Activated T-helper 2 cell treated with anti-CD3 and anti-CD28 coated beads, Interferon-gamma antibody, Interleukin-2, Interleukin-4, amounts not matched to agents 10 μg/mL and 5 μg/mL and 100 μg/mL, durations not matched to agents 14 hours and 24 hours and 36 hours (primary cell): ENCODE measurements at regions of chr1 and their contacts with region 1.

Region 1: DNA sequence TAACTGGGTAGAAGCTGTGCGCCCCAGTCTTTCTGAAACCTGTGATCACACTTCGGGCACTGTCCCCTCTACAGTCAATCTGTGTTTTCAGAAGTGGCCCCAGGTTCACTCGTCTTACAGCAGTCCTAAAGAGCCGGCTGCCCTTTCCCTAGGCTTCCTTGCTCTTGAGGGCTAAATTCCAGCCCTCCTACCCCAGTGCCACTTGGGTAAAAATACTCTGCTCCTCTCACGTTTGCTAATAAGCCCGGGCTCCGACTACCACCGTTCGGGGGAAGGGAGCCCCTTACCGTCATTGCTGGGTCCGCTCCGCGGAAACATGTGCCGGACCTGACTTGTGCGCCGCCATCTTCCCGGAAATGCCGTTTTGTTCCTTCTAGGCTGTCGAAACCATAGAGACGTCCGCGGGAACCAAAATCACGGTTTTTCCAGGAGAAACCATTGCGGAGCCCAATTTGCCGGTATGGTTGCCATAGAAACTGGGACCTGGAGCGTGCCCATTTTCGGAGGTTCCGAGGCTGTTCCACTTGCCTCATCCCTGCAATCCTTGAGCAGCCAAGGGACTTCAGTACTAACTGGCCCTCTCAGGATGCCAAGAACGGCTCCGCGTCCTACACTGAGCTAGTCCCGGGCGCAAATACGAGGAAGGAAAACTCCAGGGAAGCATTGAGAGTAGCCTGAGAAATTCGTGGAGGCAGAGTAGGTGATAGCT is at the start of gene GPATCH4:
- DNase-seq: peak; percentile 72
- H3K4me3 Mint-ChIP-seq: peak within 1 kb of the TSS; percentile 100
- H3K27ac Mint-ChIP-seq: peak within 1 kb of the TSS; percentile 99
- H3K4me1 Mint-ChIP-seq: peaks cover 24% of the 10 kb centered on the region
- H3K27me3 Mint-ChIP-seq: no peaks in the 10 kb centered on the region
- total RNA-seq, gene GPATCH4: 73.7 and 80.4 TPM in 2 replicates

Region 2: GRCh38 chr1:156583821-156584622 is 17.3 kb before region 1 on chr1:
- intact Hi-C with region 1: loop called (anchors 2 kb)
- DNase-seq: peak; percentile 50
- H3K4me3 Mint-ChIP-seq: no peak overlapping the region
- H3K27ac Mint-ChIP-seq: no peak overlapping the region
- H3K4me1 Mint-ChIP-seq: peaks cover 8% of the 10 kb centered on the region
- H3K27me3 Mint-ChIP-seq: no peaks in the 10 kb centered on the region